ENCODE measurements at regions of chr5 and their contacts with region 1.

Region 1: DNA sequence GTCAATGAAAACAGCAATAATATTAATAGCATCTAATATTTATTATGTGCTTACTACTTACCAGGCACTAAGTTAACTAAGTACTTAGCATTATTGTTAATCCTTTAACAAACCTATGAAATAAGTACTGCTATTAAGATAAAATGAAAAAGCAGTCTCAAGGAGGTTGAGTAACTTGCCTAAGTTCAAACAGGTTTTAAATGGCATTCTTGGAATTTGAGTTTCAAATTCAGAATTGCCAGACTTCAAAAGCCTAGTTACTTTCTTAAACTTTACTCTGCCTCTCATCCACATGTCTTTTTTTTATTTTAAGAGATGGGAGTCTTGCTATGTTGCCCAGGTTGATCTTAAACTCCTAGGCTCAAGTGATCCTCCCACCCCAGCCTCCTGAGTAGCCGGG is 16.0 kb downstream of the LEAP2 start:
- DNase-seq: no peak
- H3K4me3 Mint-ChIP-seq: no peak overlapping the region
- H3K27ac Mint-ChIP-seq: no peak overlapping the region
- H3K4me1 Mint-ChIP-seq: no peaks in the 10 kb centered on the region
- H3K27me3 Mint-ChIP-seq: no peaks in the 10 kb centered on the region
- CTCF ChIP-seq: no peak

Region 2: GRCh38 chr5:132655821-132656773 is 233.4 kb before region 1 on chr5:
- CTCF ChIA-PET with region 1: no interaction called
- POLR2A ChIA-PET with region 1: no interaction called
- intact Hi-C with region 1: no loop called
- DNase-seq: no peak
- H3K4me3 Mint-ChIP-seq: no peak overlapping the region
- H3K27ac Mint-ChIP-seq: no peak overlapping the region
- H3K4me1 Mint-ChIP-seq: no peaks in the 10 kb centered on the region
- H3K27me3 Mint-ChIP-seq: no peaks in the 10 kb centered on the region
- CTCF ChIP-seq: no peak

Region 3: DNA sequence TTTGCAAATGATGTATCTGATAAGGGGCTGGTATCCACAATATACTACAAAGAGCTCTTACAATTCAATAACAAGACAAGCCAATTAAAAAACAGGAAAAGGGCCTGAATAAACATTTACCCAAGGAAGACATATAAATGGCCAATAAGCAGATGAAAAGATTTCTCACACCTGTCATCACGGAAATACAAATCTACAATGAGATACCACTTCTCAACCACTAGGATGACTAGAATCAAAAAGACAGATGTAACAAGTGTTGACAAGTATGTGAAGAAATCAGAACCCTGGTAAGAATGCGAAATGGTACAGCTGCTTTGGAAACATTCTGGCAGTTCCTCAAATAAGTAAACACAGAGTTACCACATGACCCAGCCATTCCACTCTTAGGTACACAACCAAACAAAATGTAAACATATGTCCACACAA is 16.4 kb after region 1 on chr5:
- CTCF ChIA-PET with region 1: interaction called, 3 read pairs
- POLR2A ChIA-PET with region 1: interaction called, 12 read pairs
- intact Hi-C with region 1: no loop called
- DNase-seq: peak; percentile 54
- H3K4me3 Mint-ChIP-seq: no peak overlapping the region
- H3K27ac Mint-ChIP-seq: peak overlapping the region; percentile 1
- H3K4me1 Mint-ChIP-seq: peaks cover 17% of the 10 kb centered on the region
- H3K27me3 Mint-ChIP-seq: no peaks in the 10 kb centered on the region
- CTCF ChIP-seq: no peak